Breast epithelium (tissue), 4 donors: ENCODE measurements at regions of chr2 and their contacts with region 1.

Region 1: GRCh38 chr2:96116879-96117697 is 717 bp upstream of the ADRA2B start:
- DNase-seq: no peak
- H3K4me3 ChIP-seq: peak overlapping the region; percentile 49 to 91 (median 56)
- H3K27ac ChIP-seq: peak overlapping the region; percentile 53 to 77
- H3K4me1 ChIP-seq: peaks cover 3 to 12% of the 10 kb centered on the region in 2 donors
- H3K27me3 ChIP-seq: peaks cover 0 to 4% of the 10 kb centered on the region in 2 donors
- CTCF ChIP-seq: peak in 2 of 3 donors; percentile 32 to 92
- POLR2A ChIP-seq: no peak

Region 2: DNA sequence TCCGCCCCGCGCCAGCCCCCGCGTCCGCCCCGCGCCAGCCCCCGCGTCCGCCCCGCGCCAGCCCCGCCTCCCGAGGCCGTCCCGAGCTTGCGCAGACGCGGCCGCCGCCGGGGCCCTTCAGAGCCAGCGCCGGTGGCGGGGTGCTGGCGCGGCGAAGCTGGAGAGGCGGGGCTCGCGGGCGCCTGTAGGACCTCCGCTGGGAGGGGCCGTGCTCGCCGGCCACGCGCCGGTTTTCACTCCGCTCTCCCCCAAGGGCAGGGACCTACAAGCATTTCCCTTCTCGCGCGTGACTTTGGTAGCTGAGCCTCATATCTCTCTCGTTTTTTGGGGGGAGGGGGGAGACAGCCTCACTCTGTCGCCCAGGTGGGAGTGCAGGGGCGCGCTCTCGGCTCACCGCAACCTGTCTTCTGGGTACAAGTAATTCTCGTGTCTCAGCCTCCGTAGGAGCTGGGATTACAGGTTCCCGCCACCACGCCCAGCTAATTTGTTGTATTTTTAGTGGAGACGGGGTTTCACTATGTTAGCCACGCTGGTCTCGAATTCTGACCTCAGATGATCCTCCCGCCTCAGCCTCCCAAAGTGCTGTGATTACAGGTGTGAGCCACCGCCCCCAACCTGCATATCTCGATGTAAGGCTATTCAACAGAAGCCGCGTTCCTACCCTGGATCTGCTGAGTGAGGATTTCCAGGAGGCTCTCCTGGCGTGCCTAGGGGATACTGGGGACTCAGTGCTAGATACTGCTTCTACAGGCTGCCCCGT is 957.2 kb before region 1 on chr2 and contains the start of gene ZNF514:
- intact Hi-C with region 1: loop called (anchors 10 kb)
- DNase-seq: peak; percentile 57 to 62
- H3K4me3 ChIP-seq: peak within 1 kb of the TSS; percentile 74 to 95 (median 86)
- H3K27ac ChIP-seq: peak within 1 kb of the TSS; percentile 82 to 89
- H3K4me1 ChIP-seq: peaks cover 0 to 18% of the 10 kb centered on the region in 2 donors
- H3K27me3 ChIP-seq: no peaks in the 10 kb centered on the region
- CTCF ChIP-seq: no peak
- POLR2A ChIP-seq: no peak
- total RNA-seq, gene ZNF514: 18.7 to 36.1 (median 25.3) TPM

Region 3: DNA sequence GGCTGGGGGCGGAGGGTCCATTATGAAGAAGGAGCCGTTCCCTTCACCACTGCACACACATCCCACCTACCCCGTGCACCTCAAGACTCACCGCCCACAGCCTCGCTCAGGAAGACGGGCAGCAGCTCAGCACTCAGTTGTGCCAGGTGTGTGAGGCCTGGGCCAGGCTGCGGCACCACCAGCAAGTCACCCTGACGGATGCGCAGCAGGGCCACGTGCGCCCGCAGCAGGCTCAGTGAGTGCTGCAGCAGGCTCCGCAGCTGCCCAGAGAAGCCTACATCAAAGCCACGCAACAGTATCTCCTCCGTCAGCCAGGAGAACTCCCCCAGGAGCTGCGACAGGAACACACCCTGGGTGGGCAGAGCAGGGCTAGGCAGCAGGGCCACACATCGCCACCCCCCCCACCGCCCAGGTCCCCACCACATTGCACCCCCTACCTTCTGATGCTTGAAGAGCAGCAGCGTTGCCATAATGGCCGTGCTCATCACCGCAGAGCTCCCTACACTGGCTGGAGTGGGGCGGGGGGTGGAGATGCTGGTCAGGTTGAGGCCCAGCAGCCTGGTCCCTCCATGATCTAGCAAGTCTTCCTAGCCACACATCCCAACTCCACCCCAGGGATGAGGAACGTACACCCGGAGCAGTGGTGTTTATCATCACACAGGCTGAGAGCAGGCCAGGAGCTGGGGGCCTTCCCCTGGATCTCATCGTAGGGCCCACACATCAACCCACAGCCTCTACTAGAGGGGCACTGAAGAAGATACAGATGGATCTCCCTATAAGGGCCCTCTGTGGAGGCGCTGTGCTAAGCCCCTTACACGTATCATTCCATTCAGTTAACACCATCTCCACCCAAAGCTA is 92.5 kb before region 1 on chr2:
- intact Hi-C with region 1: loop called (anchors 10 kb)
- DNase-seq: peak in 1 of 2 donors; percentile 46
- H3K4me3 ChIP-seq: no peak overlapping the region
- H3K27ac ChIP-seq: no peak overlapping the region
- H3K4me1 ChIP-seq: no peaks in the 10 kb centered on the region
- H3K27me3 ChIP-seq: no peaks in the 10 kb centered on the region
- CTCF ChIP-seq: no peak
- POLR2A ChIP-seq: no peak

Region 4: DNA sequence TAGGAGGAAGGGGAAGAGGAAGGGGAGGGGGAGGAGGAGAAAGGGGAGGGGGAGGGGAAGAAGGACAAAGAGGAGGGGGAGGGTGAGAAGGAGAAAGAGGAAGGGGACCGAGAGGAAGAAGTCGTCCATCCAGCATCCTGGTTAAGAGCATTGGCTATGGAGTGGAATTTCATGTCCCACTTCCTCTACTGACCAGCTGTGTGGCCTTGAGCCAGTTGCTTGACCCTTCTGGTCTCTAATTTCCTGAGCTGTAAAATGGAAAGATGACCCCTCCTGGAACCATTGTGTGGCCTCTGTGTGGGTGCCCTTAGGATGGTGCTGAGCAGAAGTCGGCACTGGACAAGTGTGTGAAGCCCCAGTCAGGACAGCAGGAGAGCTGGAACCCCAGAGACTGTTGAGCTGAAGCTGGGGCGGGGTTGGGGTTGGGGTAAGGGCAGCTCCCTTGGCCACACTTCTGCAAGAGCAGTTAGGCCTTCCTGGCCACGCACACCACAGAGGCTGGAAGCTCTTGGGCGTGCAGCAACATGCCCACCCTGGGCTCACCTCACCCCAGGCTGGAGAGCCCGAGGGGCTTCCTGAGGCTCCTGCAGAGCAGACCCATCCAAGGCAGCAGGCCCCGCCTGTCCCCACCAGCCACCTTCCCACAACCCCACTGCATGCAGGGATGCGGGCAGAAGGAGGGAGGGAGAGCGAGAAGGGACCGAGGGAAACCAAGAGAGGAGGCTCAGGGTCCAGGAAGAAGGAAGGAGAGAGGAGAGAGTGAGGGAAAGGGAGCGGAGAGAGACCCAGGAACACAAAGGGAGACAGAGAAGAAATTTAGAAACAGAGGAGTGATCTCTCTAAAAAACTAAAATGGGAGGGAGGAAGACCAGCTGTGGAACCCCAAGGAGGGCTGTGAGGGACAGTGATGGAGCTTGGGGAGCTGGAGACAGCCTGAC is 17.0 kb before region 1 on chr2:
- intact Hi-C with region 1: no loop called
- DNase-seq: peak in 1 of 2 donors; percentile 35
- H3K4me3 ChIP-seq: no peak overlapping the region
- H3K27ac ChIP-seq: peak overlapping the region in 1 of 2 donors; percentile 20
- H3K4me1 ChIP-seq: no peaks in the 10 kb centered on the region
- H3K27me3 ChIP-seq: no peaks in the 10 kb centered on the region
- CTCF ChIP-seq: no peak
- POLR2A ChIP-seq: no peak

Region 5: DNA sequence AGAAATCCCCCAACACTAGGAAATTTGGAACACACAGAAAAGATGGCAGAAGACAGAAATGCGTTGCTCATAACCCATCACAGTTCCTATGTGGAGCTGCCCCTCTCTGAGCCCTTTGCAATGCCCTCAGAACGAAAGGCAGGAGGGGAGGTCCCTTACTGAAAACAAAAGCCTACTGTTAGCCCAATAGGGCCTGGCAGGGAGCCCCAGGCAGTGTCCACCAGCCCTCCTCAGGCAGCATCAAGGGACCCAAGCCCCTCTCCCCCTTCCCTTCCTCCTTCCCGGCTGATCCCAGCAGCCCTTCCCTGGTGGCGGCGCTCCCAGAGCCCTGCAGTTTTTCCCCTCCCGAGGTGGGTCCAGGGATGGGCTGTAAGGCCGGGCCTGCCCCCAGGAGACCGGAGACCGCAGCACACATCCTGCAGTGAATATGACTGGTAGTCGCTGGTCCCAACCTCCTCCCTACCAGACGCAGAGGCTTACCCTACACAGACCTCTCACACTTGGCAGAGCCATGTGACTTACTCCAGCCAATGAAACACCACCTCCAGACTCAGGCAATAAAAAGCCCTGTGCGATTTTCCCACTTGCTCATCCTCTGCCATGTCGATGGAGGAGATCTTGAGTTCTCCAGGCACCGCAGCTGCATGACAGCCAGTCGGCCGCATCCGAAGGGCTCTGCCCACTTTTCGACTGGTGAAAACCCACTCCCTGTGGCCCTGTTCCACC is 47.5 kb after region 1 on chr2:
- intact Hi-C with region 1: no loop called
- DNase-seq: no peak
- H3K4me3 ChIP-seq: no peak overlapping the region
- H3K27ac ChIP-seq: peak overlapping the region in 1 of 2 donors; percentile 6
- H3K4me1 ChIP-seq: no peaks in the 10 kb centered on the region
- H3K27me3 ChIP-seq: no peaks in the 10 kb centered on the region
- CTCF ChIP-seq: no peak
- POLR2A ChIP-seq: no peak